Cardiac septum (tissue), 1 donor: ENCODE measurements at regions of chr5 and their contacts with region 1.

Region 1: GRCh38 chr5:171630027-171630669 is 155.5 kb upstream of the SMIM23 start:
- DNase-seq: peak; percentile 85

Region 2: GRCh38 chr5:171484460-171484899 is 145.7 kb before region 1 on chr5:
- intact Hi-C with region 1: no loop called
- DNase-seq: no peak

Region 3: DNA sequence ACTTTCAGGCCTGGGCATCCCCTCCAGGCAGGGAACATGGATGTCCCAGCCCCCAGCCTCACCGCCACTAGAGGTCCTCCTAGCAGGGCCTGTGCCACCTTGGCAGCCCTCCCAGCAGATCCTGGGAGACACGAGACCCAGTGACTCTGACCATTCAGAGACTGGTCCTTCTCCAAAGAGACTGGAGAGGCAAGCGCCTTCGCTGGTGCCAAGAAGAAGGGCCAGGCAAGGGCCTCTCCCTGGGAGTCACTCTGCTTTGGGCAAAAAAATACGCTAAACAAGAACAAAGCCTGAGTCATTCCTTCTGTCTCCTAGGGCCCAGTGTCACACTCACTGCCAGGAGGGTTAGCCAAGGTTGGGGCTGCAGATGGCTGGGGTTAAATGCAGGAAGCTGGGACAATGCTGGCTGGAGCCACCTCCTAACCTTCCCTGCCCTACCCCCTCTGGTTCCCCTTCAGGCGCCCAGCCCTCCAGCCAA is 120.2 kb after region 1 on chr5:
- intact Hi-C with region 1: loop called (anchors 5 kb)
- DNase-seq: peak; percentile 81

Region 4: DNA sequence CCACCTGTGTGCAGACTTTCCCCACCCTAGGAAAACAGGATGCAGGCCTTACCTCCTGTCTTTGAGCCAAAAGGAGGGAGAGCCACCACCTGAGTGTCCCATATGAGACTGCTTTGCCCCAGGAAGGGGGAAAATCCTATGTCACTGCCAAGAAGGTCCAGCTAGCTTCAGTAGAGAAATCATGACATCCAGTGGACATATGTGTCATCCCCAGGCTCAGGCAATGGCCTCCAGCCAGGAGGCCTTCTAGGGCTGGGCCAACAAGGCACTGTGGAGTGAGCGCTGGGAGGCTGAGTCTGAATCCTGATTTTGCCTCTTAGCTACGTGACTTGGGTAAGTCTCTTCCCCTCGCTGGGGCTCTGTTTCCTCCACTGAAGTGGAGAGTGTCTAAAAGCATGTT is 215.7 kb after region 1 on chr5:
- intact Hi-C with region 1: loop called (anchors 2 kb)
- DNase-seq: no peak

Region 5: GRCh38 chr5:171907725-171908343 is 277.7 kb after region 1 on chr5:
- intact Hi-C with region 1: loop called (anchors 2 kb)
- DNase-seq: no peak

Region 6: DNA sequence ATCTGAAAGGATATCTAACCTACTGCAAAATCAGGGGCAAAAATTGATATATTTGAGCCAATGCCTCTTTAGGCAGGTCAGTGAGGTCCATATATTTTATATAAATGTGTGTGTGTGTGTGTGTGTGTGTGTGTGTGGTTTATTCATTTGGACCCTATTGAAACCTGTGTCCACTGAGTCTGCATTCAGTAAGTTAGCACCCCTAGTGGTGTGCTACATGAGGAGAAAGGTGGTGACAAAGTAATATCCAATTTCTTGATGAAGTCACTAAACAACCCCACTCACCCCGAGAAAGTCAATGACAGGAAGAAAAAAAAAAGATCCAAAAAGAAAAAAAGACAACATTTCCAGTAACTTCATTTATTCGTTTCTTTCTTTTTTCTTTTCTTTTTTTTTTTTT is 372.2 kb after region 1 on chr5:
- intact Hi-C with region 1: no loop called
- DNase-seq: no peak